CD4-positive, alpha-beta T cell (primary cell): ENCODE measurements at regions of chr5 and their contacts with region 1.

Region 1: GRCh38 chr5:39074016-39074886 is at the start of gene RICTOR:
- DNase-seq: peak; percentile 85 to 95 (median 89)
- ATAC-seq: peak; percentile 62
- H3K4me3 ChIP-seq: peak within 1 kb of the TSS; percentile 85
- H3K4me3 Mint-ChIP-seq: peak within 1 kb of the TSS; percentile 100
- H3K27ac ChIP-seq: peak within 1 kb of the TSS; percentile 84 to 97
- H3K27ac Mint-ChIP-seq: peak within 1 kb of the TSS; percentile 100
- H3K4me1 ChIP-seq: no peaks in the 10 kb centered on the region
- H3K4me1 Mint-ChIP-seq: peaks cover 65% of the 10 kb centered on the region
- H3K27me3 ChIP-seq: peaks cover 2 to 18% of the 10 kb centered on the region in 2 experiments
- H3K27me3 Mint-ChIP-seq: peaks cover 11% of the 10 kb centered on the region
- CTCF ChIP-seq: no peak
- total RNA-seq, gene RICTOR: 125 TPM

Region 2: GRCh38 chr5:39005566-39006232 is 68.6 kb before region 1 on chr5:
- CTCF ChIA-PET with region 1: interaction called, 3 read pairs
- POLR2A ChIA-PET with region 1: interaction called, 10 read pairs
- intact Hi-C with region 1: loop called (anchors 2 to 5 kb)
- DNase-seq: peak in 4 of 14 experiments; percentile 20 to 59 (median 48)
- ATAC-seq: peak; percentile 86
- H3K4me3 ChIP-seq: no peak overlapping the region
- H3K4me3 Mint-ChIP-seq: no peak overlapping the region
- H3K27ac ChIP-seq: no peak overlapping the region
- H3K27ac Mint-ChIP-seq: peak overlapping the region; percentile 64
- H3K4me1 ChIP-seq: peaks cover 4% of the 10 kb centered on the region
- H3K4me1 Mint-ChIP-seq: peaks cover 61% of the 10 kb centered on the region
- H3K27me3 ChIP-seq: no peaks in the 10 kb centered on the region
- H3K27me3 Mint-ChIP-seq: no peaks in the 10 kb centered on the region
- CTCF ChIP-seq: peak; percentile 64

Region 3: GRCh38 chr5:39058178-39058921 is 15.9 kb before region 1 on chr5:
- CTCF ChIA-PET with region 1: interaction called, 3 read pairs
- POLR2A ChIA-PET with region 1: interaction called, 9 read pairs
- intact Hi-C with region 1: loop called in 1 of 2 experiments (anchors 2 kb)
- DNase-seq: peak in 1 of 14 experiments; percentile 27
- ATAC-seq: no peak
- H3K4me3 ChIP-seq: peak overlapping the region; percentile 30
- H3K4me3 Mint-ChIP-seq: peak overlapping the region; percentile 78
- H3K27ac ChIP-seq: no peak overlapping the region
- H3K27ac Mint-ChIP-seq: peak overlapping the region; percentile 34
- H3K4me1 ChIP-seq: peaks cover 1% of the 10 kb centered on the region
- H3K4me1 Mint-ChIP-seq: peaks cover 91% of the 10 kb centered on the region
- H3K27me3 ChIP-seq: no peaks in the 10 kb centered on the region
- H3K27me3 Mint-ChIP-seq: no peaks in the 10 kb centered on the region
- CTCF ChIP-seq: no peak

Region 4: DNA sequence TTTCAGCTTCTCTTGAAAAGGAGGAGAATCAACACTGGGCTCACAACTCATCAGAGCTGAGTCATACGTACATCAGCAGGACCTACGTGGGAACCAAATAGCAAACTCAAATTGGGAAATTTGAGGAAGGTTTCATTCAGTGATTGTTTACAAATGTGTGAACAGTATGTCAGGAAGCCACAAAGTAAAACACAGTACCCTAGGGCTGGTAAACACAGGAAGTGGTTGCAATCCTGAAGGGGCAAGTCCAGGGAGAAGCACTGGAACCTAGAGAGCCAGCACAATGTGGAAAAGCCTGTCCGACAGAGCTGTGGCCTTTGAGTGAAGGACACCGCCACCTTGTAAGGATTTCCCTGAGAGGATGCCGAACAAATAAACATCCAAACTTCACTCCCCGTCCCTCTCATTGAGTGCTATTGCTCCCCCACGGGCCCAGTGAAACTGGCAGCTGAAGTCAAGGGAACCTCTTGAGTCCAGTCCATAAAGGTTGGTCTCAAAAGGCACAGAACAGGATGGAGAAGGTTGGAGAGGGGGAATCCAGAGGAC is 26.7 kb after region 1 on chr5:
- CTCF ChIA-PET with region 1: interaction called, 7 read pairs
- POLR2A ChIA-PET with region 1: interaction called, 10 read pairs
- intact Hi-C with region 1: loop called in 1 of 2 experiments (anchors 2 kb)
- DNase-seq: peak in 2 of 14 experiments; percentile 17 to 21
- ATAC-seq: no peak
- H3K4me3 ChIP-seq: no peak overlapping the region
- H3K4me3 Mint-ChIP-seq: peak overlapping the region; percentile 40
- H3K27ac ChIP-seq: peak overlapping the region in 1 of 2 donors; percentile 20
- H3K27ac Mint-ChIP-seq: peak overlapping the region; percentile 81
- H3K4me1 ChIP-seq: peaks cover 17% of the 10 kb centered on the region
- H3K4me1 Mint-ChIP-seq: peaks cover 46% of the 10 kb centered on the region
- H3K27me3 ChIP-seq: no peaks in the 10 kb centered on the region
- H3K27me3 Mint-ChIP-seq: no peaks in the 10 kb centered on the region
- CTCF ChIP-seq: no peak

Region 5: GRCh38 chr5:39106322-39106721 is 32.1 kb after region 1 on chr5:
- CTCF ChIA-PET with region 1: interaction called, 7 read pairs
- POLR2A ChIA-PET with region 1: interaction called, 10 read pairs
- intact Hi-C with region 1: loop called in 1 of 2 experiments (anchors 2 kb)
- DNase-seq: peak in 3 of 14 experiments; percentile 21 to 36 (median 35)
- ATAC-seq: no peak
- H3K4me3 ChIP-seq: no peak overlapping the region
- H3K4me3 Mint-ChIP-seq: no peak overlapping the region
- H3K27ac ChIP-seq: no peak overlapping the region
- H3K27ac Mint-ChIP-seq: peak overlapping the region; percentile 70
- H3K4me1 ChIP-seq: peaks cover under 1% of the 10 kb centered on the region
- H3K4me1 Mint-ChIP-seq: peaks cover 39% of the 10 kb centered on the region
- H3K27me3 ChIP-seq: no peaks in the 10 kb centered on the region
- H3K27me3 Mint-ChIP-seq: no peaks in the 10 kb centered on the region
- CTCF ChIP-seq: peak; percentile 49

Region 6: GRCh38 chr5:39194466-39195136 is 120.3 kb after region 1 on chr5:
- CTCF ChIA-PET with region 1: interaction called, 3 read pairs
- POLR2A ChIA-PET with region 1: no interaction called
- intact Hi-C with region 1: loop called in 1 of 2 experiments (anchors 5 kb)
- DNase-seq: peak in 1 of 14 experiments; percentile 52
- ATAC-seq: no peak
- H3K4me3 ChIP-seq: peak overlapping the region; percentile 76
- H3K4me3 Mint-ChIP-seq: peak overlapping the region; percentile 85
- H3K27ac ChIP-seq: peak overlapping the region; percentile 79 to 83
- H3K27ac Mint-ChIP-seq: peak overlapping the region; percentile 96
- H3K4me1 ChIP-seq: peaks cover 50% of the 10 kb centered on the region
- H3K4me1 Mint-ChIP-seq: peaks cover 77% of the 10 kb centered on the region
- H3K27me3 ChIP-seq: no peaks in the 10 kb centered on the region
- H3K27me3 Mint-ChIP-seq: no peaks in the 10 kb centered on the region
- CTCF ChIP-seq: no peak

Region 7: GRCh38 chr5:39202597-39203274 is 128.5 kb after region 1 on chr5:
- CTCF ChIA-PET with region 1: no interaction called
- POLR2A ChIA-PET with region 1: interaction called, 4 read pairs
- intact Hi-C with region 1: loop called (anchors 5 kb)
- DNase-seq: peak in 6 of 14 experiments; percentile 35 to 83 (median 68)
- ATAC-seq: peak; percentile 62
- H3K4me3 ChIP-seq: peak overlapping the region; percentile 76
- H3K4me3 Mint-ChIP-seq: peak overlapping the region; percentile 93
- H3K27ac ChIP-seq: peak overlapping the region; percentile 82
- H3K27ac Mint-ChIP-seq: peak overlapping the region; percentile 96
- H3K4me1 ChIP-seq: peaks cover 28% of the 10 kb centered on the region
- H3K4me1 Mint-ChIP-seq: peaks cover 45% of the 10 kb centered on the region
- H3K27me3 ChIP-seq: no peaks in the 10 kb centered on the region
- H3K27me3 Mint-ChIP-seq: no peaks in the 10 kb centered on the region
- CTCF ChIP-seq: no peak